ENCODE measurements at regions of chrX and their contacts with region 1.

Region 1: GRCh38 chrX:13101441-13102139 is 57.2 kb upstream of the FAM9C start:
- DNase-seq: peak; percentile 42 to 81
- ATAC-seq: peak; percentile 93 to 99 (median 98)
- H3K4me3 ChIP-seq: no peak overlapping the region
- H3K27ac ChIP-seq: peak overlapping the region; percentile 32 to 80 (median 66)
- H3K4me1 ChIP-seq: peaks cover 0 to 47% (median 27%) of the 10 kb centered on the region in 9 donors
- H3K27me3 ChIP-seq: peaks cover 0 to 44% (median 0%) of the 10 kb centered on the region in 7 donors
- CTCF ChIP-seq: no peak

Region 2: GRCh38 chrX:12984629-12985319 is 116.8 kb before region 1 on chrX:
- intact Hi-C with region 1: loop called in 4 of 10 experiments (anchors 5 to 10 kb)
- DNase-seq: no peak
- ATAC-seq: peak in 4 of 8 donors; percentile 32 to 41 (median 37)
- H3K4me3 ChIP-seq: no peak overlapping the region
- H3K27ac ChIP-seq: peak overlapping the region in 2 of 10 donors; percentile 36 to 45
- H3K4me1 ChIP-seq: peaks cover 0 to 70% (median 12%) of the 10 kb centered on the region in 9 donors
- H3K27me3 ChIP-seq: peaks cover 0 to 39% (median 0%) of the 10 kb centered on the region in 7 donors
- CTCF ChIP-seq: no peak

Region 3: DNA sequence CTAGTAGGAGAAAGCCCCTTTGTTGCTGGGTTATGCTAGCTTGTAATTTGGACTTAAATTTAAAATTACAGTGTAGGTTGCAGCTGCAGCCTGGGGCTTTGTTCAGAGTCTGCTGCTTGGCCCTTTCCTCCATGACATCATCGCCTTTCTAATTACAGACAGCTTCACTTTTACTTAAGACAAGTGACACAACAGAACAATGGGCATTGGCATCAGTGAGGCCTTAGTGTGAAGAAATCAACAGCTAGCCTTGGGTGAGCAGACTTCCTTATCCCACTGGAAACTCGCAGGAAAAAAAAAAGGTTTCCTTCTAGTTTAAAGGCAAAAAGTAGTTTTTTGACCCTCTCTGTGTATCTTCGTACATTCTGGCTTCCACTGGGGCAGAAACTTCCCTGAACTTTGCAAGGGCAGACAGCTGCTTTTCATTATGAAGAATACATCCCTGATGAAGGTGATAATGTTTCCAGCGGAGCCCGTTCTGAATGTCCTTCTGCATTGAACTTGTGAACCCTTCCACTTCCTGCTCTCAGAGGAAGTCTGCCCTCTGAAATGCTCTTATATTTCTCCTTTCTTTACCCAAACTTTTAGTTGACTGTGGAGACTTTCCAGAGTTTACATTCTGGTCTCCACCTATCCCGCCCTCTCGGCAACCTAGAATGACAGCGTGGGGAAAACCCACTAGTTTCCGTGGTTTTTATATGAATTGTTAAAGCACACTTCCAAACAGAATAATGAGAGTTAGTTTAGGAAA is 66.1 kb after region 1 on chrX:
- intact Hi-C with region 1: loop called in 1 of 10 experiments (anchors 5 kb)
- DNase-seq: peak in 1 of 2 donors; percentile 45
- ATAC-seq: peak; percentile 74 to 96 (median 88)
- H3K4me3 ChIP-seq: no peak overlapping the region
- H3K27ac ChIP-seq: peak overlapping the region; percentile 50 to 88 (median 74)
- H3K4me1 ChIP-seq: peaks cover 2 to 46% (median 16%) of the 10 kb centered on the region in 9 donors
- H3K27me3 ChIP-seq: peaks cover 0 to 17% (median 0%) of the 10 kb centered on the region in 7 donors
- CTCF ChIP-seq: no peak

Region 4: GRCh38 chrX:13473442-13474163 is 372.0 kb after region 1 on chrX:
- intact Hi-C with region 1: loop called in 2 of 10 experiments (anchors 5 to 10 kb)
- DNase-seq: no peak
- ATAC-seq: peak; percentile 41 to 93 (median 84)
- H3K4me3 ChIP-seq: peak overlapping the region in 3 of 10 donors; percentile 0 to 29 (median 6)
- H3K27ac ChIP-seq: peak overlapping the region; percentile 41 to 88 (median 67)
- H3K4me1 ChIP-seq: peaks cover 0 to 32% (median 3%) of the 10 kb centered on the region in 9 donors
- H3K27me3 ChIP-seq: peaks cover 0 to 56% (median 0%) of the 10 kb centered on the region in 7 donors
- CTCF ChIP-seq: no peak